ENCODE measurements at regions of chr2 and their contacts with region 1.

Region 1: DNA sequence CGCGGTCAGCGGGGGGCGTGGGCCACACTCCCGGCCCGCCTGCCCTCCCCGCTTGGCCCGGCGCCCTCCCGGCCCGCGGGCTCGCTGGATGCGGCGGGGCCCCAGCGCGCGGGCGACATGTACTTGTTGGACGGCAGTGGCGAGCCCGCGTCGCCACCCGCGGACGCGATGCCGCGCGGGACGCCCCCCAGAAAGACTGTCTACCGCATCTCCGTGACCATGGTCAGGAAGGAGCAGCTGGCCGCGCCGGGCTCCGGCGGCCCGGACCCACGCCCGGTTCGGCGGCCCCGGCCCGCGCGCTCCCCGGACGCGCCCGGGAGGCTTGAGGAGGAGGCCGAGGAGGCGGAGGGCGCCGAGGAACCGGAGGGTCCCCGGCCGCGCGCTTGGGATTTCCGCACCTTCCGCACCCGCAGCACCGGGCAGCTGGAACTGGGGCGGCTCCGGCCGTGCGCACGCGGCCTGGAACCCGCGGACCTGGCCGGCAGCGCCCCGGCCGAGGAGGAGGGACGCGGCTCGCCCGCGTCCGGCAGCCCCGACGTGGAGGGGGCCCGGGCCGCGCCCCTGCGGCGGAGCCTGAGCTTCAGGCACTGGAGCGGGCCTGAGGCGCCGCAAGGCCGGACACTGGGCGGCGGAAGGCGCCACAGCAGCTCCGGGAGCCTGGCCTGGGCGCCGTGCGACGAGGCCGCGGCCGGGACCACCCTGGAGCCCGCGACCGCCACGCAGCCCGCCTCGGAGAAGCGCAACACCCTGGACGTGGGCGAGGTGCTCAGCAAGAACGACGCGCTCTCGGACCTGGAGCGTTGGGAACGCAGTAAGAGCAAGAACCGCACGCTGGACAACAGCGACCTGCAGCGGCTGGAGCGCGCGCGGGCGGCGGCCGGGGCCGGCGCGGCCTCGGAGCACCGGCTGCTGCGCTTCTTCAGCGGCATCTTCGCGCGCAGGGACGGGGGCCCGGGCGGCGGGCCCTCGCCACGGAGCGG is 176.4 kb downstream of the AGAP1 start:
- DNase-seq: peak; percentile 67 to 76 (median 69)
- ATAC-seq: peak; percentile 79
- H3K4me3 ChIP-seq: peak overlapping the region; percentile 24
- H3K4me1 ChIP-seq: peaks cover 14% of the 10 kb centered on the region
- CTCF ChIP-seq: peak; percentile 57

Region 2: GRCh38 chr2:235605312-235606003 is 64.8 kb before region 1 on chr2:
- intact Hi-C with region 1: loop called in 1 of 2 experiments (anchors 10 kb)
- DNase-seq: peak; percentile 47 to 78 (median 48)
- ATAC-seq: peak; percentile 71
- H3K4me3 ChIP-seq: no peak overlapping the region
- H3K4me1 ChIP-seq: no peaks in the 10 kb centered on the region
- CTCF ChIP-seq: no peak

Region 3: DNA sequence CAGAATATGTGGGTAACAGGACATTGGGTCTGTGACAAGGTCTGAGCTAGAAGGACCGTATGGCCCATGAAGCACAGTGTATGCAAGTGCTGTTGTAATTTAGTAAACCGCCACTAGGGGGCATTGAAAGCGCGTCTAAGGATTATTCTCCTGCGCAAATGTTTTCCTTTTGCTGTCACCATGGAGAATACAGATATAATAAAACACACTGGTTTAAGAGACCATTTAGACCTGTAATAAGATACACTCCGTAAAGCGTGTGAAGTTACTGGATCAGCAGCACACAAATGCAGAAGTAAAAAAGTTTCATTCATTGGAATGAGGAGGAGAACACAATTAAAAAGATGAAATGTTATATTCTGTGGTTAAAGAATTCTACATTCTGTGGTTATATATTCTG is 96.0 kb after region 1 on chr2:
- intact Hi-C with region 1: no loop called
- DNase-seq: peak in 1 of 3 donors; percentile 92
- ATAC-seq: peak; percentile 96
- H3K4me3 ChIP-seq: no peak overlapping the region
- H3K4me1 ChIP-seq: no peaks in the 10 kb centered on the region
- CTCF ChIP-seq: peak; percentile 75